CD14-positive monocyte (primary cell): ENCODE measurements at regions of chr12 and their contacts with region 1.

Region 1: GRCh38 chr12:109844983-109845823 is 12.0 kb upstream of the TRPV4 start:
- DNase-seq: peak; percentile 82 to 84 (median 82)
- H3K4me3 ChIP-seq: peak overlapping the region; percentile 14 to 65 (median 20)
- H3K4me3 Mint-ChIP-seq: peak overlapping the region; percentile 57 to 60
- H3K27ac ChIP-seq: peak overlapping the region; percentile 90 to 94
- H3K27ac Mint-ChIP-seq: peak overlapping the region; percentile 95 to 99 (median 99)
- H3K4me1 ChIP-seq: peaks cover 62 to 64% of the 10 kb centered on the region in 2 donors
- H3K4me1 Mint-ChIP-seq: peaks cover 58% of the 10 kb centered on the region
- H3K27me3 ChIP-seq: no peaks in the 10 kb centered on the region
- H3K27me3 Mint-ChIP-seq: peaks cover 1 to 5% (median 2%) of the 10 kb centered on the region in 3 donors
- CTCF ChIP-seq: peak; percentile 99

Region 2: GRCh38 chr12:108856428-108857157 is 988.6 kb before region 1 on chr12:
- intact Hi-C with region 1: loop called in 1 of 2 experiments (anchors 5 kb)
- DNase-seq: peak; percentile 84 to 93 (median 90)
- H3K4me3 ChIP-seq: peak overlapping the region; percentile 79 to 89 (median 82)
- H3K4me3 Mint-ChIP-seq: peak overlapping the region; percentile 97 to 100
- H3K27ac ChIP-seq: peak overlapping the region; percentile 70 to 98
- H3K27ac Mint-ChIP-seq: peak overlapping the region; percentile 94 to 99 (median 98)
- H3K4me1 ChIP-seq: peaks cover 71 to 77% of the 10 kb centered on the region in 2 donors
- H3K4me1 Mint-ChIP-seq: peaks cover 74% of the 10 kb centered on the region
- H3K27me3 ChIP-seq: no peaks in the 10 kb centered on the region
- H3K27me3 Mint-ChIP-seq: peaks cover 0 to 2% (median 0%) of the 10 kb centered on the region in 3 donors
- CTCF ChIP-seq: no peak

Region 3: GRCh38 chr12:109670731-109671130 is 174.5 kb before region 1 on chr12:
- intact Hi-C with region 1: no loop called
- DNase-seq: no peak
- H3K4me3 ChIP-seq: no peak overlapping the region
- H3K4me3 Mint-ChIP-seq: no peak overlapping the region
- H3K27ac ChIP-seq: no peak overlapping the region
- H3K27ac Mint-ChIP-seq: no peak overlapping the region
- H3K4me1 ChIP-seq: no peaks in the 10 kb centered on the region
- H3K4me1 Mint-ChIP-seq: no peaks in the 10 kb centered on the region
- H3K27me3 ChIP-seq: peaks cover 0 to 3% of the 10 kb centered on the region in 2 donors
- H3K27me3 Mint-ChIP-seq: peaks cover 11 to 13% (median 13%) of the 10 kb centered on the region in 3 donors
- CTCF ChIP-seq: no peak

Region 4: DNA sequence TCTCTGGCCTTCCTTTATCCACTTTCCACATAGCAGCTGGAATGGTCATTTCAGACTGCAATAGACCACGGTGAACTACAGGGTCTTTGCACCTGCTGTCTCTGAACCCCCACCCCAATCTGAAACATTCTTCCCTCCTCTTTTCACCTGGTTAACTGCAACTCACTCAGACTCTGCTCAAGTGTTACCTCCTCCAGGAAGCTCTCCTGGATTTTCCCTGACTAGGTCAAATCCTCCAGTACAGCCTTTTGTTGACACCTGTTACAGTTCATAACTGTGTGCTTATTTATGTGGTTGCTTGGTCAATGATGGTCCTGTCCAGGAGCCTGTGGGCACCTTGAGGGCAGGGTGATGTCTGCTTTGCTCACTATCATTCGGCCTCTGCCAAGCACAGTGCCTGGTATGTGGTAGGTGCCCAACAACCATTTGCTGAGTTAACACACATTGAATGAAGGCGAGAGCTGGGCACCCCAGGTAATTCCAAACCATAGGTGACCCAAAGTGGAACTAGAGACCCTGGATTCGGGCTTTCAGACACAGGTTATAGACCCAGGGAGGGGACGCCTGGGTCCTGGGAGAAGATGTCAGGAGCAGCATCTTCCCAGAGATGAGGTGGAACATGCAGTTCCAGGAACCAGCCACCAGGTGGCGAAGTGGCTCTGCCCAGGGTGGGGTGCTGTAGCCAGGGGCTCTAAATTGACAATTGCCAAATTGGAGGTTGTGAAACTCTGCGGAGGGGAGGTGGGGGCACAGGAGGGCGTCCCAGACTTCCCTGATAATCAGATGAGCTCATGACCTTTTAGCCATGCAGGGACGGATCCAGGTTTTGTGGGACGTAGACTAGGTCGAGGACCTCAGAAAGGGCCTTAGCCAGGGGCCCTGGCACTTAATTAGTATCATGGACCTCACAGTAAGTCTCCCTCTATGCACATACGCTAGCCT is 40.1 kb before region 1 on chr12:
- intact Hi-C with region 1: loop called (anchors 1 to 2 kb)
- DNase-seq: peak; percentile 64 to 82 (median 74)
- H3K4me3 ChIP-seq: no peak overlapping the region
- H3K4me3 Mint-ChIP-seq: peak overlapping the region in 1 of 2 donors; percentile 35
- H3K27ac ChIP-seq: no peak overlapping the region
- H3K27ac Mint-ChIP-seq: peak overlapping the region in 5 of 7 donors; percentile 15 to 85 (median 75)
- H3K4me1 ChIP-seq: peaks cover 6 to 7% of the 10 kb centered on the region in 2 donors
- H3K4me1 Mint-ChIP-seq: peaks cover 7% of the 10 kb centered on the region
- H3K27me3 ChIP-seq: no peaks in the 10 kb centered on the region
- H3K27me3 Mint-ChIP-seq: peaks cover 0 to 3% (median 3%) of the 10 kb centered on the region in 3 donors
- CTCF ChIP-seq: peak; percentile 99

Region 5: GRCh38 chr12:109828236-109828550 is 17.0 kb before region 1 on chr12:
- intact Hi-C with region 1: loop called in 1 of 2 experiments (anchors 2 kb)
- DNase-seq: peak; percentile 98 to 100 (median 99)
- H3K4me3 ChIP-seq: peak overlapping the region in 1 of 3 experiments; percentile 63
- H3K4me3 Mint-ChIP-seq: peak overlapping the region; percentile 57 to 78
- H3K27ac ChIP-seq: peak overlapping the region; percentile 99 to 100
- H3K27ac Mint-ChIP-seq: peak overlapping the region; percentile 98 to 99 (median 99)
- H3K4me1 ChIP-seq: peaks cover 62 to 72% of the 10 kb centered on the region in 2 donors
- H3K4me1 Mint-ChIP-seq: peaks cover 73% of the 10 kb centered on the region
- H3K27me3 ChIP-seq: peaks cover 0 to 11% of the 10 kb centered on the region in 2 donors
- H3K27me3 Mint-ChIP-seq: peaks cover 9 to 16% (median 14%) of the 10 kb centered on the region in 3 donors
- CTCF ChIP-seq: no peak

Region 6: GRCh38 chr12:109880016-109880931 is 35.1 kb after region 1 on chr12 and contains the start of gene GLTP:
- intact Hi-C with region 1: loop called in 1 of 2 experiments (anchors 5 kb)
- DNase-seq: peak; percentile 78 to 90 (median 85)
- H3K4me3 ChIP-seq: peak within 1 kb of the TSS; percentile 96 to 98 (median 97)
- H3K4me3 Mint-ChIP-seq: peak within 1 kb of the TSS; percentile 94 to 97
- H3K27ac ChIP-seq: peak within 1 kb of the TSS; percentile 72 to 92
- H3K27ac Mint-ChIP-seq: peak within 1 kb of the TSS; percentile 87 to 98 (median 93)
- H3K4me1 ChIP-seq: peaks cover 48 to 64% of the 10 kb centered on the region in 2 donors
- H3K4me1 Mint-ChIP-seq: peaks cover 73% of the 10 kb centered on the region
- H3K27me3 ChIP-seq: no peaks in the 10 kb centered on the region
- H3K27me3 Mint-ChIP-seq: peaks cover 0 to 4% (median 2%) of the 10 kb centered on the region in 3 donors
- CTCF ChIP-seq: peak; percentile 68
- polyA plus RNA-seq, gene GLTP: 46.2 to 65.9 (median 51.7) TPM

Region 7: GRCh38 chr12:109927622-109928021 is 82.4 kb after region 1 on chr12:
- intact Hi-C with region 1: loop called in 1 of 2 experiments (anchors 5 kb)
- DNase-seq: peak; percentile 25 to 42 (median 36)
- H3K4me3 ChIP-seq: no peak overlapping the region
- H3K4me3 Mint-ChIP-seq: no peak overlapping the region
- H3K27ac ChIP-seq: no peak overlapping the region
- H3K27ac Mint-ChIP-seq: peak overlapping the region in 2 of 7 donors; percentile 59 to 62
- H3K4me1 ChIP-seq: no peaks in the 10 kb centered on the region
- H3K4me1 Mint-ChIP-seq: no peaks in the 10 kb centered on the region
- H3K27me3 ChIP-seq: no peaks in the 10 kb centered on the region
- H3K27me3 Mint-ChIP-seq: no peaks in the 10 kb centered on the region
- CTCF ChIP-seq: peak; percentile 67

Region 8: DNA sequence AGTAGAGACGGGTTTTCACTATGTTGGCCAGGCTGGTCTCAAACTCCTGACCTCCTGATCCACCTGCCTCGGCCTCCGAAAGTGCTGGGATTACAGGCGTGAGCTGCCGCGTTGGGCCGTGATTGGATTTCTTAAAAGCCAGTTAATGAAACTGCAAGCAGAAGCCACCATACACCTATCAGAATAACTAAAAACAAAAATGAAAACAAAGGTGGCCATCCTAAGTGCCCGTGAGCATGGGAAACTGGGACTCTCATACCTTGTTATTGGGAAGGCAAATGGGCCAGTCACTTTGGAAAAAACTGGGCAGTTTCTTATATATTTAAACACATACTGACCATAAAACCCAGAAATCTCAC is 761.0 kb after region 1 on chr12:
- intact Hi-C with region 1: no loop called
- DNase-seq: no peak
- H3K4me3 ChIP-seq: peak overlapping the region; percentile 31 to 73 (median 70)
- H3K4me3 Mint-ChIP-seq: peak overlapping the region; percentile 79 to 92
- H3K27ac ChIP-seq: peak overlapping the region; percentile 86 to 88
- H3K27ac Mint-ChIP-seq: peak overlapping the region; percentile 95 to 98 (median 97)
- H3K4me1 ChIP-seq: peaks cover 17 to 44% of the 10 kb centered on the region in 2 donors
- H3K4me1 Mint-ChIP-seq: peaks cover 28% of the 10 kb centered on the region
- H3K27me3 ChIP-seq: no peaks in the 10 kb centered on the region
- H3K27me3 Mint-ChIP-seq: peaks cover 0 to 2% (median 0%) of the 10 kb centered on the region in 3 donors
- CTCF ChIP-seq: no peak